ENCODE measurements at regions of chr10 and their contacts with region 1.

Region 1: GRCh38 chr10:30639946-30640786 is 10.6 kb upstream of the LYZL2 start:
- DNase-seq: no peak
- ATAC-seq: peak; percentile 40
- H3K4me3 Mint-ChIP-seq: no peak overlapping the region
- H3K27ac Mint-ChIP-seq: no peak overlapping the region
- H3K4me1 Mint-ChIP-seq: peaks cover 11% of the 10 kb centered on the region
- H3K27me3 Mint-ChIP-seq: peaks cover 37% of the 10 kb centered on the region

Region 2: GRCh38 chr10:30231071-30231652 is 409.0 kb before region 1 on chr10:
- CTCF ChIA-PET with region 1: no interaction called
- POLR2A ChIA-PET with region 1: no interaction called
- intact Hi-C with region 1: no loop called
- DNase-seq: no peak
- ATAC-seq: peak; percentile 78
- H3K4me3 Mint-ChIP-seq: no peak overlapping the region
- H3K27ac Mint-ChIP-seq: no peak overlapping the region
- H3K4me1 Mint-ChIP-seq: peaks cover 7% of the 10 kb centered on the region
- H3K27me3 Mint-ChIP-seq: peaks cover 10% of the 10 kb centered on the region

Region 3: DNA sequence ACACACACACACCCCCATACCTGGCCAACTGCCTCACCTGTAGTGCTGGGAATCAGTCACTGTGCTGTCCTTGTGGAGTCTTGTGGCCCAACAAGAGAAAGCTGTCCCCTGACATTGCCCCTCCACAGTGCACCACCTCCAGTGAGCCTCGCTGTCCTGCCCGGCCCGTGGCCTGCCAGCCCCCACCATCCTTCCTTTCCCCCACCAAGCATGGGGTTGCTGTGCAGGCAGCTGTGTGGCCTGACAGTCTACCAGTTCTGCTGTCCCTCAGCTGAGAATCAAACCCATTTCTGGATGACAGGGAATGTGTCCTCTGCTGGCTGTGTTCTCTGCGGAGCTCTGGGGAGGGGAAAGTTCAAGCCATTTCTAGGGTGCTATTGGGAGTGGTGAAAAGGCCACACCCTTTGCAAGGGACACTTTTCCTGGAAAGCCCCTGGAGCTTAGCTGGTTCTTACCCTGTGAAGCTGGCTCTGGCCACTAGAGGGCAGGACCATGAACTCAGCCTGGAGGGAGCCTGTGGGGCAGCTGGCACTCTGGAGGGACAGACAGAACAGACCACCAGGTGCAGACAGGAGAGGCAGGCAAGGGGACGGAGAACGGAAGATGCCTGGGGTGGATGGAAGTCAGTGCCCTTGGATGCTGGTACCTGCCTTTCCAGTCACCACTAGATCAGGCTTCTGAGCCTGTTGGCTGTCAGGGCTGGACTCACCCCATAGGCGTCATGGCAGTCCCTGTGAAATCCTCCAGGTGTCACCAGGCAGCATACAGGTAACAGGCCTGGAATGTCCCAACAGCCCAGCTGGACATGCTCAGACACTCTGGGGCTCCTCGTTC is 280.6 kb before region 1 on chr10:
- CTCF ChIA-PET with region 1: no interaction called
- POLR2A ChIA-PET with region 1: no interaction called
- intact Hi-C with region 1: no loop called
- DNase-seq: peak; percentile 80
- ATAC-seq: peak; percentile 94
- H3K4me3 Mint-ChIP-seq: no peak overlapping the region
- H3K27ac Mint-ChIP-seq: no peak overlapping the region
- H3K4me1 Mint-ChIP-seq: peaks cover 3% of the 10 kb centered on the region
- H3K27me3 Mint-ChIP-seq: no peaks in the 10 kb centered on the region

Region 4: DNA sequence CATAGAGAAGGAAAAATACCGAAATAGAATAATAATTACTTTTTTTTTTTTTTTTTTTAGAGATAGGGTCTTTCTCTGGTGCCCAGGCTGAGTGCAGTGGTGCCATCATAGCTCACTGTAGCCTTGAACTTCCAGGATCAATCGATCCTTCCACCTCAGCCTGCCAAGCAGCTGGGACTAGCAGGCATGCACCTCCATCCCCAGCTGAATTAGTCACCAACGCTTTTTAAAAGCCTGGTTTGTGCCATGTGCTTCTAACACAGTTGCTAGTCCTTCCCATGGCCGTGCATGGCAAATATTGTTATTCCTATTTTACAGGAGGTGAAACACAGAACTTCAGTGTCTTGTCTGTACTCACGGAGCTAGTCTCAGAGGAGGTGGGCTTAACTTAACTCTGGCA is 33.9 kb before region 1 on chr10:
- CTCF ChIA-PET with region 1: interaction called, 14 read pairs
- POLR2A ChIA-PET with region 1: no interaction called
- intact Hi-C with region 1: no loop called
- DNase-seq: no peak
- ATAC-seq: no peak
- H3K4me3 Mint-ChIP-seq: no peak overlapping the region
- H3K27ac Mint-ChIP-seq: no peak overlapping the region
- H3K4me1 Mint-ChIP-seq: no peaks in the 10 kb centered on the region
- H3K27me3 Mint-ChIP-seq: peaks cover 6% of the 10 kb centered on the region

Region 5: GRCh38 chr10:30662814-30663213 is 22.6 kb after region 1 on chr10:
- CTCF ChIA-PET with region 1: interaction called, 11 read pairs
- POLR2A ChIA-PET with region 1: no interaction called
- intact Hi-C with region 1: no loop called
- DNase-seq: no peak
- ATAC-seq: no peak
- H3K4me3 Mint-ChIP-seq: no peak overlapping the region
- H3K27ac Mint-ChIP-seq: no peak overlapping the region
- H3K4me1 Mint-ChIP-seq: no peaks in the 10 kb centered on the region
- H3K27me3 Mint-ChIP-seq: peaks cover 9% of the 10 kb centered on the region

Region 6: DNA sequence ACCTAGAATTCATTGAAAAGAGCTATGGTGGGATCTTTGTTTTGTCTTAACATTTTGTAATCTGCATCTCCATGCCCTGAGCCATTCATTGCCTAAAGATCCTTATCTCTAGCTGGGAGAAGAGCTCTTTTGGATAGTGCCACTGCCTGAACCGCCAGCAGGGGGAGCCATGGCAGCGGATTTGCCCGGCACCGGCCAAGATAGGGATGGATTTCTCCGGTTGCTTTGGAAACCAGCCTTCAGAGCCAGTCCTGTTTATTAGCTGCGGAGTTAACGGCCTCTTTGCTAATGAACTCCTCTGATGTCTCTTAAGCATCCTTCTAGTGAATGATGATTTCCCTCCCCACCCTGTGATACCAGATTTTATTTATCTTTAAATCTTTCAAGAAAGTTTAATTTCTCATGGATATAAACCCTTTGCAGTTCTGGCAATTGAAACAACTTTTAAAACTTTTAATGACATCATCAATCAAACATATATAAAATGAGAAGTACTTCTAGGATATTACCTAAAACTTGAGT is 47.6 kb after region 1 on chr10:
- CTCF ChIA-PET with region 1: interaction called, 14 read pairs
- POLR2A ChIA-PET with region 1: no interaction called
- intact Hi-C with region 1: no loop called
- DNase-seq: peak; percentile 90
- ATAC-seq: peak; percentile 58
- H3K4me3 Mint-ChIP-seq: peak overlapping the region; percentile 43
- H3K27ac Mint-ChIP-seq: peak overlapping the region; percentile 75
- H3K4me1 Mint-ChIP-seq: peaks cover 70% of the 10 kb centered on the region
- H3K27me3 Mint-ChIP-seq: peaks cover 13% of the 10 kb centered on the region

Measured in activated CD4-positive, alpha-beta T cell treated with anti-CD3 and anti-CD28 coated beads for 36 hours (primary cell).